MCF 10A (cell line): ENCODE measurements at regions of chr1 and their contacts with region 1.

Region 1: GRCh38 chr1:31938174-31938950 is at the start of gene PTP4A2:
- DNase-seq: peak; percentile 97
- H3K4me3 Mint-ChIP-seq: peak within 1 kb of the TSS; percentile 96
- H3K27ac Mint-ChIP-seq: peak within 1 kb of the TSS; percentile 97
- H3K4me1 Mint-ChIP-seq: peaks cover 38% of the 10 kb centered on the region
- H3K27me3 Mint-ChIP-seq: no peaks in the 10 kb centered on the region
- CTCF ChIP-seq: peak; percentile 35
- total RNA-seq, gene PTP4A2: 196 and 220 TPM in 2 replicates

Region 2: GRCh38 chr1:31699341-31699891 is 238.9 kb before region 1 on chr1:
- CTCF ChIA-PET with region 1: no interaction called
- POLR2A ChIA-PET with region 1: no interaction called
- intact Hi-C with region 1: no loop called
- DNase-seq: no peak
- H3K4me3 Mint-ChIP-seq: no peak overlapping the region
- H3K27ac Mint-ChIP-seq: no peak overlapping the region
- H3K4me1 Mint-ChIP-seq: peaks cover 48% of the 10 kb centered on the region
- H3K27me3 Mint-ChIP-seq: no peaks in the 10 kb centered on the region
- CTCF ChIP-seq: no peak

Region 3: GRCh38 chr1:31904339-31905092 is 33.8 kb before region 1 on chr1:
- CTCF ChIA-PET with region 1: interaction called, 3 read pairs
- POLR2A ChIA-PET with region 1: interaction called, 30 read pairs
- intact Hi-C with region 1: no loop called
- DNase-seq: peak; percentile 74
- H3K4me3 Mint-ChIP-seq: no peak overlapping the region
- H3K27ac Mint-ChIP-seq: no peak overlapping the region
- H3K4me1 Mint-ChIP-seq: peaks cover 7% of the 10 kb centered on the region
- H3K27me3 Mint-ChIP-seq: no peaks in the 10 kb centered on the region
- CTCF ChIP-seq: no peak

Region 4: DNA sequence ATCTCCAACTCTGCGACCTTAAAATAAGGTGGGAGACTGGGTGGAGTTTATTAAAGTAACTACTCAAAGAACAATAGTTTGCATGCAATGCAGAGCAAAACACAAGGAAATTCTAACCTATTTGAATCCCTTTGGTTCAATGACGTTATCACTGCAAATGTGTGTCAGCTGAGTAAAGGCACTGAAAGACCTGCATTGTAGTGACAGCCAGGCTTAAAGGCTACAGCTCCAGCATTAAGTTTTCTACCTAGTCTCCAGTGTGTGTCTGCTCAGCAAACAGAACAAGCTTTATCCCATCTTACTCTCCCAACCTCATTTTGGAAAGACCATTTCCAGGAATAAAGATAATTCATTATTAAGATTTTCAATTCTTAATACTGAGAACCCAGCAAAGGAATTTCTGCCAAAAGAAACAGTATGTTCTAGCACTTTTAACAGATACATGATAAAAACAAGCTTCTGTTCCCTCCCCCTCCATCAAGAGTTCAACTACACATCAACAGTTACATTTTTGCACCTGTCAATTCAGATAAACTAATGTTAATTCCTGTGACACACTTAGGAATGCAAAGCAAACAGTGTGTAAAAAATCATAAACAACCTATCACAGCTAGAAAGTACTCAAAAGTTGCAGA is 14.3 kb before region 1 on chr1:
- CTCF ChIA-PET with region 1: interaction called, 5 read pairs
- POLR2A ChIA-PET with region 1: interaction called, 14 read pairs
- intact Hi-C with region 1: no loop called
- DNase-seq: no peak
- H3K4me3 Mint-ChIP-seq: peak overlapping the region; percentile 28
- H3K27ac Mint-ChIP-seq: peak overlapping the region; percentile 39
- H3K4me1 Mint-ChIP-seq: peaks cover 42% of the 10 kb centered on the region
- H3K27me3 Mint-ChIP-seq: no peaks in the 10 kb centered on the region
- CTCF ChIP-seq: no peak

Region 5: GRCh38 chr1:31961536-31961935 is 23.2 kb after region 1 on chr1:
- CTCF ChIA-PET with region 1: interaction called, 120 read pairs
- POLR2A ChIA-PET with region 1: interaction called, 409 read pairs
- intact Hi-C with region 1: loop called (anchors 1 kb)
- DNase-seq: no peak
- H3K4me3 Mint-ChIP-seq: no peak overlapping the region
- H3K27ac Mint-ChIP-seq: no peak overlapping the region
- H3K4me1 Mint-ChIP-seq: peaks cover 11% of the 10 kb centered on the region
- H3K27me3 Mint-ChIP-seq: no peaks in the 10 kb centered on the region
- CTCF ChIP-seq: no peak

Region 6: DNA sequence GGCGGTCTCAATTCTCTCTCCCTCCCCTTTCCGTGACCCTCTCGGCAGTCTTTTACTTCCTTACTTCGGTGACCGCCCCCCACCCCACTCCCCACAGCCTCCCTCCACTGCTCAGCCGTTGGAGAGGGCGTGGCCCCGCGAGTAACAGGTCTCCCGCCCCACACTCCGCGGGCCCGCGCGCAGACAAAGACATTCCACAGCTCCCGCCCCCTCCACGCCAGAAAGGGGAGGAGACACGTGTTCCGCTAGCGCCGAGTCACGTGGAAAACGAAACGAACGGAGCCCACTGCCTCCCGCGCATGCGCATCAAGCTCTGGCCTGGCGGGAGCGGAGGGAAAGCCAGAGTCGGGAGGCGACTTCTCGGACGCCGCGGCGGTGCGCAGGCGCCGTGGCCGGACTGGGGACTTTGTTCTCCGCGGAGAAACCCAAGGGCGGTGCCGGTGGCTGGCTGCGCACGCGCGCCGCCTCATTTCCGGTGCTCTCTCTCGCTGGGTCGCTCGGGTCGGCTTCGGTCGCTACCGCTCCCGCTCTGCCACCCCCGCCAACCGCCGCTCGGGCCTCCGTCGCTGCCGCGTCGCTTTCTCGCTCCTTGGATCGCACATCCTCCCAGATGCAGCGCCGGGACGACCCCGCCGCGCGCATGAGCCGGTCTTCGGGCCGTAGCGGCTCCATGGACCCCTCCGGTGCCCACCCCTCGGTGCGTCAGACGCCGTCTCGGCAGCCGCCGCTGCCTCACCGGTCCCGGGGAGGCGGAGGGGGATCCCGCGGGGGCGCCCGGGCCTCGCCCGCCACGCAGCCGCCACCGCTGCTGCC is 75.2 kb after region 1 on chr1 and contains the start of gene KHDRBS1:
- CTCF ChIA-PET with region 1: no interaction called
- POLR2A ChIA-PET with region 1: interaction called, 36 read pairs
- intact Hi-C with region 1: no loop called
- DNase-seq: peak; percentile 97
- H3K4me3 Mint-ChIP-seq: peak within 1 kb of the TSS; percentile 98
- H3K27ac Mint-ChIP-seq: peak within 1 kb of the TSS; percentile 95
- H3K4me1 Mint-ChIP-seq: peaks cover 26% of the 10 kb centered on the region
- H3K27me3 Mint-ChIP-seq: no peaks in the 10 kb centered on the region
- CTCF ChIP-seq: no peak
- total RNA-seq, gene KHDRBS1: 106 and 107 TPM in 2 replicates